RWPE1 (cell line): ENCODE measurements at regions of chr17 and their contacts with region 1.

Region 1: GRCh38 chr17:15944759-15945529 is at the start of gene ADORA2B:
- DNase-seq: peak; percentile 71
- H3K27ac ChIP-seq: peak within 1 kb of the TSS; percentile 100
- CTCF ChIP-seq: peak; percentile 81

Region 2: GRCh38 chr17:15929941-15930340 is 15.0 kb before region 1 on chr17:
- CTCF ChIA-PET with region 1: no interaction called
- POLR2A ChIA-PET with region 1: interaction called, 10 read pairs
- DNase-seq: no peak
- H3K27ac ChIP-seq: no peak overlapping the region
- CTCF ChIP-seq: no peak

Region 3: DNA sequence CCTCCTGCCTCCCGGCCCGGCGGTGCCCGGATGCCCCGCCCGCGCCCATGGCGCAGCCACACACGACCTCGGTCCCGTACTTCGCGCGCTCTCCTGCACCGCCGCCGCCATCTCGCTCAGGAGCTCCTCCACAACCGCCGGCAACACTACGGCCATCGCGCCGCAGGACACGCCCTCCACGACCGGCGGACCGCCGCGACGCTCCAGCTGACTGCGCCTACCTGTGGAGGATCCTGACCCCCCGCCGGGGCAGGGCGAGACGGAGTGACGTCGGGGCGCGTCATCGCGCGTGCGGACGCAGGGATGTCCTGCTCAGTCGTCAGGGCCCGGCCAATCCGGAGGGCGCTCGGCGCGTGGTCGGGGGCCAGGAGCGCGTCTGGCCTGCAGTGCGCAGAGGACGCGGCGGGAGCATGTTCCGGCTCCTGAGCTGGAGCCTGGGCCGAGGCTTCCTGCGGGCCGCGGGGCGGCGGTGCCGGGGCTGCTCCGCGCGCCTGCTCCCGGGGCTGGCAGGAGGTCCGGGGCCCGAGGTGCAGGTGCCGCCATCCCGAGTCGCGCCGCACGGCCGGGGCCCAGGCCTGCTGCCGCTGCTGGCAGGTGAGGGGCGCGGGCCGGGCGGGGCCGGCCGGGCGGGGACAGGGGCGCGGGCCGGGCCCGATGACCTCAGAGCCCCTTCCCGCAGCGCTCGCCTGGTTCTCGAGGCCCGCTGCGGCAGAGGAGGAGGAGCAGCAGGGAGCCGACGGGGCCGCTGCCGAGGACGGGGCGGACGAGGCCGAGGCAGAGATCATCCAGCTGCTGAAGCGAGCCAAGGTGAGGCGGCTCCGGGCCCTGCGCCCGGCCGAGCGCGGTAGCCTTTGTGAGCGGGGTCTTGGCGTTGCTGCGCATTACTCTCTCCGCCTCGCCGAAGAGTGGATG is 54.8 kb after region 1 on chr17 and contains the starts of genes TTC19 and ZSWIM7:
- CTCF ChIA-PET with region 1: interaction called, 12 read pairs
- POLR2A ChIA-PET with region 1: interaction called, 12 read pairs
- DNase-seq: peak; percentile 98
- H3K27ac ChIP-seq: peak within 1 kb of the TSS; percentile 96
- CTCF ChIP-seq: no peak

Region 4: GRCh38 chr17:16215273-16215964 is 270.5 kb after region 1 on chr17 and contains the start of gene NCOR1:
- CTCF ChIA-PET with region 1: no interaction called
- POLR2A ChIA-PET with region 1: no interaction called
- DNase-seq: peak; percentile 86
- H3K27ac ChIP-seq: peak within 1 kb of the TSS; percentile 95
- CTCF ChIP-seq: 0 out of 2 replicates have a peak, but pooled peaks have one; percentile 26